Activated CD4-positive, alpha-beta T cell treated with anti-CD3 and anti-CD28 coated beads for 36 hours (primary cell): ENCODE measurements at regions of chr12 and their contacts with region 1.

Region 1: DNA sequence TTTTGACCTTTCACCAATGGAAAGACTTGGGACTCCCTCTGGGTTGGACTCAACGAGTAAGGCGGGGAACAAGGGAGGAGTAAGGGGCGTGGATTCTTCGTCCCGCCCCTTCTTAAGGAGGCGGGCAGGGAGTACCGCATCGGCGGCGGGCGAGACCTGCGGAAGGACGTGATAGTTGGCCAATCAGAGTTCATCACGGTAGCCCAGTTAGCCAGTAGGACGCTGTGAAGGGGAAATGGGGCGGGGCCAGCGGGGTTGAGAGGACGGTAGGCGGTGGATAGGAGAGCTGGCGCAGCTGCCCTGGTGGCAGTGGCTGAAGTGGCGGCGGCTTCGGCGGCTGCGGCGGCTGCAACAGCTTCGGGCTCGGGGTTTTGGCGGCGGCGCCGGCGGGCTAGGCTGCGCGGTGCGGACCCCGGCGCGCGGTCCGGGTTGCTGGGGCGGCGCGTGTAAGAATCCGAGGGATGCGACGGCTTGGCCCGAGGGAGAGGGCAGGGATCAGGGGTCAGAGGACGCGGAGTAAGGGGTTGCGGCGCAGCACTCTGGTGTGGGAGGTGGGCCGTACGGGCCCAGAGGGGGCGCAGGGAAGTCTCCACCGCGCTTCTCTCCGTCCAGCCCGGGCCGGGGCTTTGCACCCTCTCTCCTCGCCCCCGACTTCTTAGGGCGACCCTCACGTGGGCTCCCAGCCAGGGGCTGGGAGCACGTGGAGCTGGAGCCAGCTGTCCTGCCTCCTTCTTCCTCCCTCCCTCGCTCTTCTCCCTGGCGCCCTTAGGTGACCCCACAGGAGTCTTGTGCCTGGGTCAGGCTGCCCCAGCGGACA is at the start of gene TPCN1:
- DNase-seq: peak; percentile 100
- ATAC-seq: peak; percentile 95
- H3K4me3 Mint-ChIP-seq: peak within 1 kb of the TSS; percentile 94
- H3K27ac Mint-ChIP-seq: peak within 1 kb of the TSS; percentile 91
- H3K4me1 Mint-ChIP-seq: peaks cover 34% of the 10 kb centered on the region
- H3K27me3 Mint-ChIP-seq: no peaks in the 10 kb centered on the region
- total RNA-seq, gene TPCN1: 35.5 to 37.0 TPM

Region 2: DNA sequence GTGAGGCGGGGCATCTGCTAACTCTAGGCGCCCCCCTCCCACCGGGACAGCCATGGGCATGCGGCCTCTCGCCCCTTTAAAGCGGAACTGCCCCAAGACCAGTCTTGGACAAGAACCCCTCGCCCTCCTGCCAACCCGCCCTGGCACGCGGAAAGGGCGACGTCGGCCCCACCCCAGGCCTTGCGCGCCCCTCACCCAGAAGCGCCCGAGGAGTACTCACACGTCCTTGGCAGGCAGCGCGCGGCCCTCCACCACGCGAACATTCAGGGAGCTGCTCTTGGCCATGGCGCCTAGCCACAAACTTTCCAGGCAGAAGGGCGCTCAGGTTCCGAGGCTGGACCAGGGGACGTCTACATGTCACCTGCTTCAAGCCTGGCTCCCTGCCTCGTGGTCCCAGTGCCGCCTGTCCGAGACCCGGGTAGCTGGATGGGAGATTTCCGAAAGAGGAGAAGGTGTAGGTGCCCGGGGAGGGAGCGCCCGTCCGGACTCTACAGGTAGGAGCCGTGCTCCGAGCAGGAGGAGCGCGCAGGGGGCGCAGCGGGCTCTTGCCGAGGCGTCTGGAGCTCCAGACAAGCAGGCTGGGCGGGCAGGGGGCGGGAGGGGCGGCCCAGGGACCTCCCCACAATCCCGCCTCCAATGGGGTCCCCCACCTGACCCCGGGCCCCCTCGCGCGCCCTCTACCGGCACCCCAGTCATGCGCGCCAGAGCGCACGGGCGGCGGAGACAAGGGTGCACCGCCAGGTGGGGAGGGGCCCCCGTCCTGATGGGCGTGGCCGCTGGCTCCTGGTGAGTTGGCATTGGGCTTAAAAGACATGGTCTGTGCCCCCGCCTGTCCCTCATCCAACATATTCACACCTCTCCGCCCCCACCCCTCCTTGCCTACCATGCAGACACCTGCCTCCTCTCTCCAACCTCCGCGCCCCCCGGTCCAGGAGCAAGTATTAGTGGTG is 85.9 kb before region 1 on chr12 and contains the start of gene RASAL1:
- CTCF ChIA-PET with region 1: interaction called, 3 read pairs
- POLR2A ChIA-PET with region 1: no interaction called
- intact Hi-C with region 1: loop called in 1 of 2 experiments (anchors 1 kb)
- DNase-seq: peak; percentile 96
- ATAC-seq: peak; percentile 92
- H3K4me3 Mint-ChIP-seq: peak within 1 kb of the TSS; percentile 73
- H3K27ac Mint-ChIP-seq: peak within 1 kb of the TSS; percentile 92
- H3K4me1 Mint-ChIP-seq: peaks cover 16% of the 10 kb centered on the region
- H3K27me3 Mint-ChIP-seq: no peaks in the 10 kb centered on the region
- total RNA-seq, gene RASAL1: 9.0 to 10.6 TPM

Region 3: GRCh38 chr12:113208041-113208934 is 13.1 kb before region 1 on chr12:
- CTCF ChIA-PET with region 1: interaction called, 4 read pairs
- POLR2A ChIA-PET with region 1: interaction called, 8 read pairs
- intact Hi-C with region 1: loop called (anchors 1 kb)
- DNase-seq: peak; percentile 85
- ATAC-seq: peak; percentile 86
- H3K4me3 Mint-ChIP-seq: peak overlapping the region; percentile 45
- H3K27ac Mint-ChIP-seq: peak overlapping the region; percentile 95
- H3K4me1 Mint-ChIP-seq: peaks cover 54% of the 10 kb centered on the region
- H3K27me3 Mint-ChIP-seq: no peaks in the 10 kb centered on the region

Region 4: DNA sequence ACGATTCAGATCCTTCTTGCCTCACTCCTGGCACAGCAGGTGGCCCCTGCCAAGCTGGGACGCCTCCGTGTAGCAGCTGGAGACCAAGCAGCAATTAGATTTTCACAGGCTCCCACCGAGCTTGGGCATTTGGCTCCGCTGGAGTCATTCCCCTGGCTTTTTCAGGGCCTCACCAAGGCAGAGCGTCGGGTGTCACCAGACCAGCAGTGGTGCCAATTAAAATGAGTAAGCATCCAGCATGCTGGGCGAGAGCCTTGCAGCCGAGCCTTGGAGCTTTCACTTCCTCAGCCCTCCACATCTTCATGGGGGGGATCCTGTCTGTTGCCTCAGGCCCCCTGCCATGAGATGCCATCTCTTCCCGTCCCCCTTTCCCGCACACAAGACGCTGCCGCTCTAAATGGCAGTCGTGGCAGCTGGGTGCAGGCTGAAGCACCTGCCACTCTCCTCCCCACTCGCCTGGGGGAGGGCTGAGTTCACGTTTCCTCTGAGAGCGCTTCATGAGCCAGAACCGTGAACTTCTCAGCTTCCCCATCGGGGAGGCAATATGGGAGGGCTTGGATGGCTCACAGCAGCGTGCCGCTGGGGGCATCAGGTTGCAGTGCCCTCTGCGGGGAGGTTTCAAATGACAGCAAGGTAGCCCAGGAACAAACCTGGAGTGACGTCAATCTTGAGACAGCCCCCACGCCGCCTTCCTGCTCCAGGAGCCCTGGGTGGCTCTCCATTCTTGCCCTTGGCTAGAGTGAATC is 11.6 kb after region 1 on chr12:
- CTCF ChIA-PET with region 1: interaction called, 15 read pairs
- POLR2A ChIA-PET with region 1: interaction called, 6 read pairs
- intact Hi-C with region 1: loop called (anchors 1 kb)
- DNase-seq: peak; percentile 80
- ATAC-seq: peak; percentile 77
- H3K4me3 Mint-ChIP-seq: peak overlapping the region; percentile 64
- H3K27ac Mint-ChIP-seq: peak overlapping the region; percentile 93
- H3K4me1 Mint-ChIP-seq: peaks cover 60% of the 10 kb centered on the region
- H3K27me3 Mint-ChIP-seq: no peaks in the 10 kb centered on the region

Region 5: GRCh38 chr12:113261847-113262470 is 40.6 kb after region 1 on chr12:
- CTCF ChIA-PET with region 1: interaction called, 4 read pairs
- POLR2A ChIA-PET with region 1: no interaction called
- intact Hi-C with region 1: loop called in 1 of 2 experiments (anchors 5 kb)
- DNase-seq: peak; percentile 63
- ATAC-seq: peak; percentile 84
- H3K4me3 Mint-ChIP-seq: no peak overlapping the region
- H3K27ac Mint-ChIP-seq: peak overlapping the region; percentile 79
- H3K4me1 Mint-ChIP-seq: peaks cover 38% of the 10 kb centered on the region
- H3K27me3 Mint-ChIP-seq: no peaks in the 10 kb centered on the region

Region 6: DNA sequence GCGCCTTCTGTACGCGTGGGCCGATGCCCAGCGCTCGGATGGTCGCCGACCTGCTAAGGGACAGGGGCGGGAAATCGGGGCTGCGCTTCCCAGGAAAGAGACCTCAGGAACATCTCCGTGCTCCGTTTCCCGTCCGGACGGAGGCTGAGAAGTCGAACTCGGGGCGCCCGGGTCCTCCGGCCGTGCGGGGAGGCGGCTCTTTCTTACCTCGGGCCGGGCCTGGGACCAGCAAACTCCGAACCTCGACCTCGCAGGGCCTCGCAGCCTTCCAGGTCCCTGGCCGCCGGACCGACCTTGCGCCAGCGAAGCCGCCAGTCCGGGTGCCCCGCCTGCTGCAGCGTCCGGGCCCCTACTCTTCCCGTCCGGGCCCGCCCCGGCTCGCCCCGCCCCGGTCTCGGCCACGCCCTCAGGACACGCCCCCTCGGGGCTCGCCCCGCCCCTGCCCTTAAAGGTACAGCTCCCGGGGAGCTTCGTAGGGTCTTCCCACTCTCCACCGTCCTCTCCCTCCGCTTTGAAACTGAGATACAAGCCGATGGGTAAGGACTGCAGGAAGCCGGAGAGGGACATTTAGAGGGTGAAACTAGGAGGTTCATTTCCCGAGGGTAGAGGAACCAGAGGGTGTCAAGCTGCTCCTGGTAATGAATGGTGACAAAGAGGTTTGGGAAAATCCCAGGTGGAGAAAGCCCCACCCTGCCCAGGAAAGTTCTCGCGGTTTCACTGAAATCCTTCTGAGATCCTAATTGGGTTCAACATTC is 113.6 kb after region 1 on chr12 and contains the start of gene SLC8B1:
- CTCF ChIA-PET with region 1: no interaction called
- POLR2A ChIA-PET with region 1: no interaction called
- intact Hi-C with region 1: loop called in 1 of 2 experiments (anchors 1 kb)
- DNase-seq: peak; percentile 92
- ATAC-seq: peak; percentile 98
- H3K4me3 Mint-ChIP-seq: peak within 1 kb of the TSS; percentile 89
- H3K27ac Mint-ChIP-seq: peak within 1 kb of the TSS; percentile 76
- H3K4me1 Mint-ChIP-seq: peaks cover 17% of the 10 kb centered on the region
- H3K27me3 Mint-ChIP-seq: no peaks in the 10 kb centered on the region
- total RNA-seq, gene SLC8B1: 17.9 to 19.4 TPM

Region 7: GRCh38 chr12:113358381-113359132 is 137.2 kb after region 1 on chr12 and contains the start of gene PLBD2:
- CTCF ChIA-PET with region 1: no interaction called
- POLR2A ChIA-PET with region 1: no interaction called
- intact Hi-C with region 1: loop called (anchors 1 kb)
- DNase-seq: peak; percentile 98
- ATAC-seq: peak; percentile 98
- H3K4me3 Mint-ChIP-seq: peak within 1 kb of the TSS; percentile 84
- H3K27ac Mint-ChIP-seq: peak within 1 kb of the TSS; percentile 86
- H3K4me1 Mint-ChIP-seq: peaks cover 22% of the 10 kb centered on the region
- H3K27me3 Mint-ChIP-seq: no peaks in the 10 kb centered on the region
- total RNA-seq, gene PLBD2: 13.7 to 17.3 TPM